Activated CD8-positive, alpha-beta T cell treated with anti-CD3 and anti-CD28 coated beads, Interleukin-2, amount 10 ng/mL, durations not matched to agents 7 days and 5 days (primary cell): ENCODE measurements at regions of chr21 and their contacts with region 1.

Region 1: GRCh38 chr21:14737922-14738321 is 191.8 kb upstream of the SAMSN1 start:
- DNase-seq: peak; percentile 73
- ATAC-seq: peak; percentile 84
- H3K4me3 Mint-ChIP-seq: no peak overlapping the region
- H3K27ac Mint-ChIP-seq: no peak overlapping the region
- H3K4me1 Mint-ChIP-seq: peaks cover 58% of the 10 kb centered on the region
- H3K27me3 Mint-ChIP-seq: no peaks in the 10 kb centered on the region

Region 2: DNA sequence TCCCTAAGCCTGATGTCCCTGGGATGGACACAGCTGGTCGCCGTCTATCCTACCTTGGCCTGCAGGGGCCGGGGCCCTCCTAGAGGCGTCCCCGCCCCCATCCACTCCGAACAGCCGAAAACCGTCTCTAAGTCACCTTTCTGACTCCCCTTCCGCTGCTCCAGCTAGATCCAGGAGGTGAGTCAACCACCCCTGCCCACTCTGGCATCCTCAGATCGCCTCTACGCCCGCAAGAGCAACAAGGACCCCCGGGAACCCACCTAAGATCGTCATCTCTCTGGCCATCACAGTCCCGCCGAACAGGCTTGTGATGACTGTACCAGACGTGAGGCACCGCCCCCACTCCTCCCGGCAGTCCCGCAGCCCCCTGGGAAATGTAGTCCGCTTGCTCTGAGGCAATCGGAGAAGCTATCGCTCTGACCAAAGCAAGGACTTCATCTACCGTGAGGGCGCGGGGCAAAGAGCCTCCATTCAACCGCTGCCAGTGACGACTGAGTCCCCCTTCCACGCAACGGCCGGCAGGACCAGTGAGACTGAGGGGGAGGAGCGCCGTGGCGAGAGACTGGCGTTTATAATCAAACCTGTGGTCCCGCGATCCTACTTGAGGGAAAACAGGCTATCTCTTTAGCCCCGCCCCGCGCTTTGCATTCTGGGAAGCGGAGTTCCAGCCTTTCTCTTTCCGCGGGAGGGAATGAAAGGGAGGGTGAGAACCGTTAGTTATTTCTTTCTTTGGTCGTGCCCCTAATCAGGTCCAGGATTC is 354.9 kb before region 1 on chr21 and contains the start of gene HSPA13:
- CTCF ChIA-PET with region 1: interaction called, 14 read pairs
- POLR2A ChIA-PET with region 1: no interaction called
- DNase-seq: peak; percentile 100
- ATAC-seq: peak; percentile 98
- H3K4me3 Mint-ChIP-seq: peak within 1 kb of the TSS; percentile 99
- H3K27ac Mint-ChIP-seq: peak within 1 kb of the TSS; percentile 98
- H3K4me1 Mint-ChIP-seq: peaks cover 39% of the 10 kb centered on the region
- H3K27me3 Mint-ChIP-seq: peaks cover 2% of the 10 kb centered on the region
- total RNA-seq, gene HSPA13: 26.0 to 30.4 TPM

Region 3: DNA sequence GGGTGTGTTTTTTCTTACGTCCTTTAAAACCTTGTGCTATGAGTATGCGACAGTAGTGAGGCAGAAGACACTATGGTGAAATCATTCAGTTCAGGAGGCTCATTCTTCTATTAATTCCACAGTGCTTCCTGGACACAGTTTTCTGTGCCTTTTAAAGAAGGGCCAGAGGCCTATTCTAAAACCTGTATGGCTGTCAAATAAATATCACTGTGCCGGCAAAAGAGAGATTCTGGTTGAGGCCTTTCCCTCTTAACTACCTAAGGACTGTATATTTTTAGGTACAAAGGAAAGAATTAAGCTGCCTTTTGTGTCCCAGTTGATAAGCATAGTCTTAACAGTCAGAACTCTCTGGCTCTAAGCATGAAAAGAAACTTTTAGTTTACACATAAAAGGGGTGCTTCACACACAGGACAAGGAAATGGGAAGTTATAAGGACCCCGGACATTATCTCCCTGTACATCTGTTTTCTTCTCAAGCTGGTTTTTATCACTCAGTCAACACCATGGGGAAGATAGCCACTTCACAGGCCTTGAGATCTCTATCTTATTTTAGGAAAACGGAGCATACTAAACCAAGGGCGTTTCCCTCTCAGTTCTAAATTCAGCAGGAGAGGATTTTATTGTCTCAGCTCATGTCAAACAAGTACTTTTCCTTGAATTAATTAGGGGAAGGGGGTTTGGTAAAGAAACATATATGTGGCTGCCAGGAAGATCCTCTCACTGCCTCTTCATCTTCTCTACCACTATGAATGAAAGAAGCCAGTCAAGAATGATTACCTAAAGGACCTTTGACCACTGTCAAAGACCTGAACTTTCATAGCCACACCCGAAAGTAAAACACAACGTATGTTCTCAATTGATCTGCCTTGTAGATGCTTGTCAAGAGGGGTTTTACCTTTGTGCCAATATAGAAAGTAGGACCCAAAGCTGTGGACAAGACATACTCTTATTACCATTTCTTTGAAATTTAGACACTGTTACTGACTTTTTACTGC is 283.6 kb before region 1 on chr21:
- CTCF ChIA-PET with region 1: interaction called, 10 read pairs
- POLR2A ChIA-PET with region 1: no interaction called
- DNase-seq: no peak
- ATAC-seq: peak; percentile 39
- H3K4me3 Mint-ChIP-seq: peak overlapping the region; percentile 31
- H3K27ac Mint-ChIP-seq: peak overlapping the region; percentile 82
- H3K4me1 Mint-ChIP-seq: peaks cover 56% of the 10 kb centered on the region
- H3K27me3 Mint-ChIP-seq: no peaks in the 10 kb centered on the region

Region 4: DNA sequence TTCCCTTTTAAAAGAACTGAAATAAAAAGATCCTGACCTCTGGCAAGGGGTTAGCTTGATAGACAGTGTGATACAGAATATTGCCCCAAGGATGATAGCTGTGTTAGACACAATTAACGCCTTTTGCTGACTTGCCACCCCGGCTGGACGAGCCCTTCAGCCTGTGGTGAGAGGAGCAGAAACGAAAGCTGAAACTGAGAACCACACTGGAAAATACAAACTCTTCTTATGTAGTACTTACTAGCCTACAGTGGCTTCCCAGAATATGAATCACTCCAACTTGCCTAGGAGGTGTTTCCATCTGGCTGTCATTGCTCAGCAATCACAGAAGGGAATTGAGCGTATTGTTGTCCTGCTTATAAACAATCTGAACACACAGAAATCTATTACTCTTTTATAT is 214.7 kb before region 1 on chr21:
- CTCF ChIA-PET with region 1: interaction called, 32 read pairs
- POLR2A ChIA-PET with region 1: no interaction called
- DNase-seq: peak; percentile 54
- ATAC-seq: peak; percentile 89
- H3K4me3 Mint-ChIP-seq: peak overlapping the region; percentile 48
- H3K27ac Mint-ChIP-seq: peak overlapping the region; percentile 64
- H3K4me1 Mint-ChIP-seq: peaks cover 63% of the 10 kb centered on the region
- H3K27me3 Mint-ChIP-seq: no peaks in the 10 kb centered on the region

Region 5: DNA sequence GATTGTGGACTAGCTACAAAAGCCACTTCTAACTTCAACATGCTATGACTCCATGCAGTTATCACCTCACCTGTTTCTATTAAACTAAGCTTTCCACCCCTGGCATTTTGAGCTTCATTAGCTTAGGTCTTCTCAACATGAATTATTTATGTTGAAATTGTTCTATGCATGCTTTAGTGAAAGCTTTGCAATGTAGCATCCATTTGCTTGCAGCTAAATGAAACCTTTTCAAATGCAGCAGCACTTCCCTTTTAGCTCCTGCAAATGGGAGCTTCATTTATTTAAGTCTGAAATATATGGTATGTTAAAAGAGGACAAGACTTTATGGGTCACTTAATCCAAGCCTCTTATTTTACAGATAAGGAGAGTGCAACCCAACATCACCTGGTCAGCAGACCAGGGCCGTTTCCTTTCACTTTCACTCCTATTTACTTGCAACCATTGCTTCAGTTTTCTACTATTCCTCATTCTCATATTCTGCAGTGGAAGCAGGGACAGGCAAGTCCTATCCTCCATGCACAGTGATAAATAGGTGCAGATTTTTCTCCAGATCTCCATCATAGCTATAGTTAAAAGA is 135.5 kb before region 1 on chr21:
- CTCF ChIA-PET with region 1: interaction called, 10 read pairs
- POLR2A ChIA-PET with region 1: no interaction called
- DNase-seq: no peak
- ATAC-seq: peak; percentile 70
- H3K4me3 Mint-ChIP-seq: peak overlapping the region; percentile 63
- H3K27ac Mint-ChIP-seq: peak overlapping the region; percentile 80
- H3K4me1 Mint-ChIP-seq: peaks cover 42% of the 10 kb centered on the region
- H3K27me3 Mint-ChIP-seq: no peaks in the 10 kb centered on the region

Region 6: GRCh38 chr21:14725219-14725618 is 12.7 kb before region 1 on chr21:
- CTCF ChIA-PET with region 1: interaction called, 39 read pairs
- POLR2A ChIA-PET with region 1: no interaction called
- DNase-seq: no peak
- ATAC-seq: no peak
- H3K4me3 Mint-ChIP-seq: no peak overlapping the region
- H3K27ac Mint-ChIP-seq: no peak overlapping the region
- H3K4me1 Mint-ChIP-seq: peaks cover 22% of the 10 kb centered on the region
- H3K27me3 Mint-ChIP-seq: no peaks in the 10 kb centered on the region